PC-9 (cell line): ENCODE measurements at regions of chr5 and their contacts with region 1.

Region 1: GRCh38 chr5:143134900-143135299 is 268.6 kb downstream of the NR3C1 start:
- DNase-seq: no peak
- H3K4me3 ChIP-seq: no peak overlapping the region
- H3K27ac ChIP-seq: no peak overlapping the region
- H3K4me1 ChIP-seq: no peaks in the 10 kb centered on the region
- H3K27me3 ChIP-seq: no peaks in the 10 kb centered on the region
- CTCF ChIP-seq: no peak

Region 2: GRCh38 chr5:142959683-142960657 is 174.9 kb before region 1 on chr5:
- CTCF ChIA-PET with region 1: no interaction called
- POLR2A ChIA-PET with region 1: no interaction called
- intact Hi-C with region 1: no loop called
- DNase-seq: peak; percentile 37 to 84
- H3K4me3 ChIP-seq: no peak overlapping the region
- H3K27ac ChIP-seq: peak overlapping the region; percentile 86
- H3K4me1 ChIP-seq: peaks cover 37% of the 10 kb centered on the region
- H3K27me3 ChIP-seq: no peaks in the 10 kb centered on the region
- CTCF ChIP-seq: no peak

Region 3: GRCh38 chr5:143124593-143124992 is 10.3 kb before region 1 on chr5:
- CTCF ChIA-PET with region 1: interaction called, 14 read pairs
- POLR2A ChIA-PET with region 1: no interaction called
- intact Hi-C with region 1: no loop called
- DNase-seq: no peak
- H3K4me3 ChIP-seq: no peak overlapping the region
- H3K27ac ChIP-seq: no peak overlapping the region
- H3K4me1 ChIP-seq: no peaks in the 10 kb centered on the region
- H3K27me3 ChIP-seq: no peaks in the 10 kb centered on the region
- CTCF ChIP-seq: no peak

Region 4: GRCh38 chr5:143161893-143162540 is 27.1 kb after region 1 on chr5:
- CTCF ChIA-PET with region 1: no interaction called
- POLR2A ChIA-PET with region 1: interaction called, 12 read pairs
- intact Hi-C with region 1: no loop called
- DNase-seq: no peak
- H3K4me3 ChIP-seq: no peak overlapping the region
- H3K27ac ChIP-seq: no peak overlapping the region
- H3K4me1 ChIP-seq: no peaks in the 10 kb centered on the region
- H3K27me3 ChIP-seq: no peaks in the 10 kb centered on the region
- CTCF ChIP-seq: no peak